Naive thymus-derived CD4-positive, alpha-beta T cell (primary cell): ENCODE measurements at regions of chr11 and their contacts with region 1.

Region 1: GRCh38 chr11:128336203-128336602 is 251.2 kb downstream of the ETS1 start:
- DNase-seq: no peak
- ATAC-seq: no peak
- H3K4me3 ChIP-seq: no peak overlapping the region
- H3K4me3 Mint-ChIP-seq: peak overlapping the region in 1 of 10 donors; percentile 35
- H3K27ac ChIP-seq: no peak overlapping the region
- H3K27ac Mint-ChIP-seq: peak overlapping the region in 4 of 9 donors; percentile 18 to 99 (median 77)
- H3K4me1 ChIP-seq: peaks cover 10 to 38% of the 10 kb centered on the region in 2 donors
- H3K4me1 Mint-ChIP-seq: peaks cover 33 to 92% (median 81%) of the 10 kb centered on the region in 7 donors
- H3K27me3 ChIP-seq: no peaks in the 10 kb centered on the region
- H3K27me3 Mint-ChIP-seq: no peaks in the 10 kb centered on the region

Region 2: GRCh38 chr11:128365044-128365443 is 28.8 kb after region 1 on chr11:
- CTCF ChIA-PET with region 1: no interaction called
- POLR2A ChIA-PET with region 1: interaction called, 3 read pairs
- intact Hi-C with region 1: loop called in 1 of 2 experiments (anchors 5 kb)
- DNase-seq: peak in 5 of 9 donors; percentile 17 to 48 (median 45)
- ATAC-seq: no peak
- H3K4me3 ChIP-seq: no peak overlapping the region
- H3K4me3 Mint-ChIP-seq: no peak overlapping the region
- H3K27ac ChIP-seq: no peak overlapping the region
- H3K27ac Mint-ChIP-seq: peak overlapping the region in 2 of 9 donors; percentile 40 to 85
- H3K4me1 ChIP-seq: no peaks in the 10 kb centered on the region
- H3K4me1 Mint-ChIP-seq: peaks cover 8 to 47% (median 37%) of the 10 kb centered on the region in 7 donors
- H3K27me3 ChIP-seq: no peaks in the 10 kb centered on the region
- H3K27me3 Mint-ChIP-seq: peaks cover 0 to 5% (median 0%) of the 10 kb centered on the region in 5 donors

Region 3: DNA sequence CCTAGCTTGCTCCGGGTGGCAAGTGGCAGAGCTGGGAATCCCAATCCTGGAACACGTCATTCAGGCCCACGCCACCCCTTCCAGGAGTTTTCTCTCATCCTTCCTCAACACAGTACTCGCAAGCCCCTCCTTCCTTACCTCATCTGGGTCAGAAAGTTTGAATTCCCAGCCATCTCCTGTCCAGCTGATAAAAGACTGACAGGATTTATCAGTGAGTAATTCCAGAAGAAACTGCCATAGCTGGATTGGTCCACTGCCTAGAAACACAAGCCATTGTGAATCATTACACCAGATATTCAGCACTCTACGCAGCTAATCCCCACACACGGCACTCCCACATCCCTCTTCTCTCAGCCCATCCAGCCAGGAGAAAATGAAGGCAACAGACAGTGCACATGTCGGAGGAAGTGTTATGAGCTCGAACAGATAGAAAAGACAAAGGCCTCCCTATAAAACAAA is 127.2 kb after region 1 on chr11:
- CTCF ChIA-PET with region 1: interaction called, 3 read pairs
- POLR2A ChIA-PET with region 1: interaction called, 11 read pairs
- intact Hi-C with region 1: no loop called
- DNase-seq: no peak
- ATAC-seq: no peak
- H3K4me3 ChIP-seq: peak overlapping the region; percentile 37
- H3K4me3 Mint-ChIP-seq: peak overlapping the region; percentile 73 to 99 (median 80)
- H3K27ac ChIP-seq: peak overlapping the region; percentile 97
- H3K27ac Mint-ChIP-seq: peak overlapping the region; percentile 88 to 100 (median 98)
- H3K4me1 ChIP-seq: peaks cover 74 to 86% of the 10 kb centered on the region in 2 donors
- H3K4me1 Mint-ChIP-seq: peaks cover 64 to 100% (median 93%) of the 10 kb centered on the region in 7 donors
- H3K27me3 ChIP-seq: no peaks in the 10 kb centered on the region
- H3K27me3 Mint-ChIP-seq: no peaks in the 10 kb centered on the region